GM18951 (cell line): ENCODE measurements at regions of chr5 and their contacts with region 1.

Region 1: DNA sequence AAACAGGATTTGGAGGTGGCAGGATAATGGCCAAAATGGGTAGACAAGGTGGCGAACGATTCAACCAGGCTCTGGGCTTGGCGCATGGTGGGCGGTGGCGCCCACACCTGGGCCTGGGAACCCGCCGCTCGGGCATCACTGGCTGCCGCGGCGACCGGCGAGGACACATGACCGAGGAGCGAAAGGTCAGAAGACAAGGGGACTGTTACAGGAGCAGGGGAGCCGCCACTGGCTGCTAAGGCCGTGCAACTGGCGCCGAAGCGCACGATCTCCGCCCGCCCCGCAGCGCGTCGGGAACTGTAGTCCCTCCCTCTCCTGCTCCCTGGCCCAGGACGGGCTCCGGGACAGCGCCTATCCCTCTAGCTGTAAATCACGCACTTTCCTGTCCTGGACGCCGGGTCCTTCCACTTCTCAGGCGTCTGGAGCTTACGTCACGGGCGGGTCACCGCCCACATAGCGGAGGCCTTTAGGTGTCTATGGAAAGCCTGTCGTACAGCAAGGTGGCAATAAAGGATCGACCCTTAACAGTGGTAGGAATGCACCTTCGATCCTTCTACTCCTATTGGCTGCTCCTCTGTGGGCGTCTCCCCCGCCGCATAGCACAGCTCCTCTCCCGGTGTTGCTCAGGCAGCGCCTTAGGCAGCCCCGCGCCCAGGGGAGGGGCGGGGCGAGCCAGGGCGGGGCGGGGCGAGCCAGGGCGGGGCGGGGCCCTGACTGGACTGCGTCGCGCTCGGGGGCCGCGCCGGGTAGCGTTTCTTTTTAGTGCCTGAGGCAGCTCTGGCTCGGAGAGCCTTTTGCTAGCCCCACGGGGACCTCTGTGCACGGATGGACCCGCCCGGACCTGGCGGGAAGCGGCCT is at the start of gene ICE1:
- POLR2A ChIP-seq: peak; percentile 84

Region 2: GRCh38 chr5:4879693-4880303 is 542.4 kb before region 1 on chr5:
- in situ Hi-C with region 1: loop called (anchors 25 kb)
- POLR2A ChIP-seq: no peak

Region 3: DNA sequence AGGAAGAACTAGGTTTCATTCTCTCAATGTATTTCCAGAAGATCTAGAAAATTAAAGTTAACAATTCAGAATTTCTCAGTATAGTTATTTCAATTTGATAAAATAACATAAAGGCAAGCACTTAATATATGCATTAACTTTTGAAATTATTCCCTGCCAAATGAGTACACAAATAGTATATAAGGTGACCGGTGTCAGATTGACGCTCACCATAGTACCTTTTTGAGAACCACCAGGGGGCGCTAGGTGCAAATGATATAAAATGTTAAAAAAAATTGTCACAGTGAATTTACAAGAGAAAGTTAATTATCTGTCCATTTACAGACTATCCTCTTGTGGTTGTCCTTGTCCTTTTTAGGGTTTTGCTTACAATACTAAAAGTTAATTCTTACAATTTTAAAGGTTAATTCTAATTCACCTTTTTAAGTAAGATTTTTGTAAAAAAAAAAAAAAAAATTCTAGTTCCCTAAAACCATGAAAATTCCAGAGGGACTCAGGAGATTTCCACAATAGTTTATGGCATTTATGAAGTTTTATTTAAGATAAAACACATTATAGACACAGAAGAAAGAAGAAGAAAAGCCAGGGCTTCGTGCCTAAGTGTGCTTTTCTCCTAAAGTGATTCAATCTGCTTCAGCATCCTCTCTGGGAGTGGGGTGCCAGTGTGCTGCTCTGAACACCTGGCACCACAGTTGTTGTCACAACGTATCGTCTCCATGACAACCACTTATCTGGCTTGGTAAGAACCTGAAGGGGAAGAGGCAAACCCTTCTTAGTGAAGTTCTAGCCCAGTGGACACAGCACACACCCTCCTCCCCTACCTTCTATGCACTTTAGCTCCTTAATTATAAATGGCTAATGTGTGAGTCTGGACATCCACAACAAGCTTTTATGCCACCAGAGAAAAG is 280.3 kb before region 1 on chr5:
- in situ Hi-C with region 1: loop called (anchors 10 kb)
- POLR2A ChIP-seq: no peak

Region 4: DNA sequence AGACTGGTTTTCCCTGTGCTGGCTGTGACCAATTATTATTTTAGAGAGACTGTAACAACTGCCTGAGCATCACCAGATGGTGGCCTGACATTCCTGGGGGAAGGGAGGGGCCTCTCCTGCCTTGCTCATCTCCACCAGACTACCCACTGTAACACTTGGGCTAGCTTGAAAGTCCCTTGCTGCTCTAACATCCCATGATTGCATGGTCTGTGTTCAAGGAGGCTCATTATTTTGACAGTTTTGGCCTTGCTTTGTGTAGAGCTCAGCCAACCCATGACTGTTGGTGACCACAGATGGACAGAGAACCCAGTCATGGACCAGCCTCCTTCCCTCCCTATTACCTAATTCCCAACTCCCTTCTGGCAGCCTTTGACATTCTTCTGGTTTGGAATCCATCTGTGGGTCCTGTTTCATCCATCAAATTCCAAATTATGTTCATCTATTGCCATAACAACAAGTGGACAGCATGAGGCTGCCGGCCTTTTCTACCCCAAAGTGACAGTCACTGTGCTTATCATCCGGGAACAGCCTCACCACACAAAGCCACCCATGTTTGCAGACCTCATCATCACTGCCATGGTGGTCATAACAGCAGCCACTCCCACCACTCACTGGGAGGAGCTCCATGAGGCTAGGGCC is 48.7 kb before region 1 on chr5:
- in situ Hi-C with region 1: no loop called
- POLR2A ChIP-seq: no peak

Region 5: GRCh38 chr5:5699062-5699461 is 276.9 kb after region 1 on chr5:
- in situ Hi-C with region 1: no loop called
- POLR2A ChIP-seq: no peak